Endothelial cell of umbilical vein (primary cell): ENCODE measurements at regions of chr11 and their contacts with region 1.

Region 1: DNA sequence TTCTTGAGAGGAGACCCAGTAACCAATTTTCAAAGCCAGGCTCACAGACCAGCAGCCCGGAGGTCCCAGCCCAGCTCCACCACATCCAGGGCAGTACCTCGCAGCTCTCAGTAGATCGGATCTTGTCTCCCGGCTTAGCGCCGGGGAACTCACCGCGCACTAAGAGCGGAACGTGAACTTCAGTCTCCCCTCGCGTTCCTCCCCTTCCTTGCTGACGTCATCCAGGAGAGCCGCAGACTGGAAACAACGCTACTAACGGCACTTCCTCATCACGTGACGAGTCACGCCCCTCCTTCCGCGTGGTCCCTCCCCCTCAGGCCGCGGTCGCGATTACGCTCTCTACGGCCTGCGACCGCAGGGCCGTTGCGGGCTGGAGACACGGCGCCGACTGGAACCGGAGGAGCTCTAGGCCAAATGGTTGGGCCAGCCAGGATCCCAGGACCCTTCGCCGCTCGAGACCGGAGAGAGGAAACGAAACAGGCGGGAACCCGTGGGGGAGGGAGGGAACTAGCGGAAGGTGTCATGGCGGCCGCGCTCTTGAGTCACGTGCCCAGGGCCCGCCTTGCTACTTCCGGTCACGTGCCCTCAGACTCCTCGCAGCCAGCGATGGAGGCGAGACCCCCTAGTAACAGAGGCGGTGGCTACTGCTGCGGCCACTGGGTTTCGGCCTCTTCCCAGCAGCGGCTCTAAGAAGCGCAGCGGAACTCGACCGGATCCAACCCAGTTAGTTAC is at the starts of genes GTF2H1 and HPS5:
- DNase-seq: peak; percentile 98
- H3K4me3 ChIP-seq: peak within 1 kb of the TSS; percentile 60 to 90 (median 63)
- H3K27ac ChIP-seq: peak within 1 kb of the TSS; percentile 79
- H3K4me1 ChIP-seq: peaks cover 31% of the 10 kb centered on the region
- H3K27me3 ChIP-seq: no peaks in the 10 kb centered on the region
- CTCF ChIP-seq: no peak
- POLR2A ChIP-seq: peak; percentile 98
- total RNA-seq, gene GTF2H1: 44.4 and 47.7 TPM in 2 replicates
- total RNA-seq, gene HPS5: 14.1 and 15.6 TPM in 2 replicates

Region 2: GRCh38 chr11:17077520-17078401 is 1244.4 kb before region 1 on chr11 and contains the start of gene RPS13:
- CTCF ChIA-PET with region 1: no interaction called
- POLR2A ChIA-PET with region 1: no interaction called
- dilution Hi-C with region 1: no loop called
- intact Hi-C with region 1: loop called (anchors 5 kb)
- DNase-seq: peak; percentile 100
- H3K4me3 ChIP-seq: peak within 1 kb of the TSS; percentile 69 to 90 (median 83)
- H3K27ac ChIP-seq: peak within 1 kb of the TSS; percentile 76
- H3K4me1 ChIP-seq: peaks cover 14% of the 10 kb centered on the region
- H3K27me3 ChIP-seq: no peaks in the 10 kb centered on the region
- CTCF ChIP-seq: no peak
- POLR2A ChIP-seq: peak; percentile 99
- total RNA-seq, gene RPS13: 1,051 and 1,169 TPM in 2 replicates

Region 3: DNA sequence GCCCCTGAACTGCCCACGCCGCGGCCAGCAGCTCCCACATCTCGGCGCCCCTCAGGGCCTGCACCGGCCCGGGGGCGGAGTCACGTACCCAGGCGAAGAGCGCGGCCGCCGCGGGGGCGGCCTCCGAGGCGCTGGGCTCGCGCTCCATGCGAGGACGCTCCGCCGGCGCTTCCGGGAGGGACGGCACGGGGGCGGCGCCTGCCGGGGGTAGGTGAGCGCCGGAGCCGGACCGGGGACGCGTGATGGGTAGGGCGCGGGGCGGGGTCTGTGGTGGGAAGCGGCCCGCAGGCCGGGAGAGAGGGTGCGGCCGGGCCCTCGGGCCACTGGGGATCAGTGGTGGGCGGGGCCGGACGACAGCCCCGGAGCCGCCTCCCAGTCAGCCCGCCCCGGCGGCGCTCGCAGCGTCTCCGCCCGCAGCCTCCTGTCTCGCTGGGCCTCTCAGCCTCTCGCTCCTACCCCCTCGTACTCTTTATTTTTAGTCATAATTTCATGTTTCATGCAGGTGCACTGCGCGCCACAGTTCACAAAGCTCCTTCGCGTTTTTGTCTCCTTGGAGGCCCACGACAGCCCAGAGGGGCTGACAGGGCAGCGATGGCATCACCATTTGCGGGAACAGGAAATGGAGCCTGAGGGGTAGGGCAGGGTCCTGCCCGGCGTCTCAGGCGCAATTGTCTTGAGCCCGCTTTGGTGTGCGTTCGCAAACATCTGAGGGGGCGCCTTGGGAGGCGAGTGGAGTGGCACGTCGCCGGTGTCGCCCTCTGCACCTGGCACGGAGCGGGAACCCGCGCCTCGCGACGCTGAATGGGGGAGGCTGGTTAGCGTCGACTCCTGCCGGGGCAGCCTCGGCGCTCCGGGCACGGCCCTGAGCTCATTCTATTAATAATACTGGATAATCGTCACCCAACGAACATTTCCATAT is 309.0 kb before region 1 on chr11 and contains the start of gene SERGEF:
- CTCF ChIA-PET with region 1: no interaction called
- POLR2A ChIA-PET with region 1: no interaction called
- dilution Hi-C with region 1: no loop called
- intact Hi-C with region 1: loop called (anchors 5 kb)
- DNase-seq: peak; percentile 77
- H3K4me3 ChIP-seq: peak within 1 kb of the TSS; percentile 59 to 85 (median 62)
- H3K27ac ChIP-seq: peak within 1 kb of the TSS; percentile 2
- H3K4me1 ChIP-seq: peaks cover 9% of the 10 kb centered on the region
- H3K27me3 ChIP-seq: peaks cover 9 to 16% of the 10 kb centered on the region in 2 experiments
- CTCF ChIP-seq: no peak
- POLR2A ChIP-seq: peak; percentile 78
- total RNA-seq, gene SERGEF: 12.3 and 16.7 TPM in 2 replicates

Region 4: DNA sequence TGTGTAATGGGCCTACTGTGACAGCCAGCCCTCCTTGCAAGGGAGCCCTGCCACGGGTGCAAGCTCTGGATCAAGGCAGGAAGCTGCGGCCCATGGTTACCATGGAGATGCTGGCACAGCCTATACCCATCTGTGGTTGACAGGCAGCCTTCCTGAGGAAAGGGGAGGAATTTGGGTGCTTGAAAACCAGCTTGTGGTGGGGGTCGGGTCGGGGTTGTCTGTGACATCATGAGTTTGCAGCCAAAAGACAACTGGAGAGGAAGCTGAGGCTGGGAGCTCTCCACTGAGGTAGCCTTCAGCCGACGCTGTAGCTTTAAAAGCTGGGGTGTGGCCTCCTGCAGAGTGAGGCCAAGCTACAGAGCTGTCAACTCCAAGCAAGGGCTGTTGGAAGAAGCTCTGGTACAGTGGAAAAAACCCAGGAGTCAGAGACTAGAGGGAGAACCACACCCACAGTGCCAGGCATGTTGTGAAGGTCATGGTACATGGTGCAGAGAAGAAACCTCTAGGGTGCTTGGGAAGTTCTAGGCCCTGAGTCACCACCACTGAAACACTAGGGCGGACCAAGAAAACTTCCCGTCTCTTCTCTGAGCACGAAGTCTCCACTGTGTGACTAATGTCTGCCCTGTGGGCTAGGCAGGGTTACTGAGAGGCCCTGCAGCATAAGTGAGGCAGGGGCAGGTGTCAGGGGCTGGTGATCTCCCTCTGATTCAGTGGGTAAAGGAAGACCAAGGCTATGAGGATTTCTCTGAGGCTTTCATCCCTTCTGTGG is 61.4 kb after region 1 on chr11:
- CTCF ChIA-PET with region 1: no interaction called
- POLR2A ChIA-PET with region 1: no interaction called
- dilution Hi-C with region 1: no loop called
- intact Hi-C with region 1: loop called (anchors 1 kb)
- DNase-seq: peak; percentile 71
- H3K4me3 ChIP-seq: no peak overlapping the region
- H3K27ac ChIP-seq: peak overlapping the region; percentile 67
- H3K4me1 ChIP-seq: peaks cover 20% of the 10 kb centered on the region
- H3K27me3 ChIP-seq: no peaks in the 10 kb centered on the region
- CTCF ChIP-seq: no peak
- POLR2A ChIP-seq: no peak

Region 5: GRCh38 chr11:18526521-18527296 is 204.6 kb after region 1 on chr11 and contains the start of gene TSG101:
- CTCF ChIA-PET with region 1: interaction called, 4 read pairs
- POLR2A ChIA-PET with region 1: no interaction called
- dilution Hi-C with region 1: no loop called
- intact Hi-C with region 1: loop called (anchors 1 kb)
- DNase-seq: peak; percentile 98
- H3K4me3 ChIP-seq: peak within 1 kb of the TSS; percentile 51 to 96 (median 74)
- H3K27ac ChIP-seq: peak within 1 kb of the TSS; percentile 99
- H3K4me1 ChIP-seq: peaks cover 15% of the 10 kb centered on the region
- H3K27me3 ChIP-seq: no peaks in the 10 kb centered on the region
- CTCF ChIP-seq: no peak
- POLR2A ChIP-seq: peak; percentile 96
- total RNA-seq, gene TSG101: 41.3 and 45.5 TPM in 2 replicates

Region 6: GRCh38 chr11:18634140-18635032 is 312.2 kb after region 1 on chr11 and contains the start of gene SPTY2D1:
- CTCF ChIA-PET with region 1: no interaction called
- POLR2A ChIA-PET with region 1: no interaction called
- dilution Hi-C with region 1: no loop called
- intact Hi-C with region 1: loop called (anchors 1 kb)
- DNase-seq: peak; percentile 99
- H3K4me3 ChIP-seq: peak within 1 kb of the TSS; percentile 79 to 99 (median 97)
- H3K27ac ChIP-seq: peak within 1 kb of the TSS; percentile 83
- H3K4me1 ChIP-seq: peaks cover 16% of the 10 kb centered on the region
- H3K27me3 ChIP-seq: peaks cover 0 to 1% of the 10 kb centered on the region in 2 experiments
- CTCF ChIP-seq: no peak
- POLR2A ChIP-seq: peak; percentile 96
- total RNA-seq, gene SPTY2D1: 13.7 and 18.7 TPM in 2 replicates